A673 (cell line): ENCODE measurements at regions of chr18 and their contacts with region 1.

Region 1: DNA sequence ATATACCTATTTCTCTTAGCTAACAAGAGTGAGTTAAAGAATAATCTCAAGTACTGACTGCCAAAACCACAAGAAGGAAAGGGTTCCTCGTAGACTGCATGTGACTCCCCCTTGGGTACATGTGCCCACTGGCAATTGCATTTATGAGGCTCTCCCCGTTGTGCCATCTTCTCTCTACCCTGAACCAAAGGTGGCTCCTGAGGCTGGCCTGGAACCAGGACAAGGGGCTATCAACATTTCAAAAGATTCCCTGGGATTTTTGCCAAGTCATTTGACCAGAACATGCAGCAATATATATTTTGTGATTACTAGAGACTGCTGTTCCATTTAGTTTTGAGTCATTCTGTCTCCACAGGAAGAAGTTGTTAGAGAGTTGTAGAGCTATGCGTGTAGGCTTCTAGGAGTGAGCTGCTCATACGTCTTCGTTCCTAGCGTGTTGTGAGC is 45.8 kb downstream of the LAMA3 start:
- DNase-seq: peak; percentile 38
- H3K4me3 ChIP-seq: no peak overlapping the region
- H3K27ac ChIP-seq: no peak overlapping the region
- H3K4me1 ChIP-seq: peaks cover 18% of the 10 kb centered on the region
- H3K27me3 ChIP-seq: no peaks in the 10 kb centered on the region
- CTCF ChIP-seq: no peak

Region 2: GRCh38 chr18:23115683-23116096 is 619.4 kb before region 1 on chr18:
- CTCF ChIA-PET with region 1: no interaction called
- POLR2A ChIA-PET with region 1: no interaction called
- intact Hi-C with region 1: no loop called
- DNase-seq: peak; percentile 44
- H3K4me3 ChIP-seq: no peak overlapping the region
- H3K27ac ChIP-seq: no peak overlapping the region
- H3K4me1 ChIP-seq: peaks cover 27% of the 10 kb centered on the region
- H3K27me3 ChIP-seq: no peaks in the 10 kb centered on the region
- CTCF ChIP-seq: no peak

Region 3: GRCh38 chr18:23689031-23689615 is 45.9 kb before region 1 on chr18 and contains the start of gene LAMA3:
- CTCF ChIA-PET with region 1: no interaction called
- POLR2A ChIA-PET with region 1: no interaction called
- intact Hi-C with region 1: loop called (anchors 5 kb)
- DNase-seq: peak; percentile 68
- H3K4me3 ChIP-seq: peak within 1 kb of the TSS; percentile 46
- H3K27ac ChIP-seq: no peak within 1 kb of the TSS
- H3K4me1 ChIP-seq: no peaks in the 10 kb centered on the region
- H3K27me3 ChIP-seq: peaks cover 6% of the 10 kb centered on the region
- CTCF ChIP-seq: peak; percentile 40; the same call in 1 of the 2 replicates
- total RNA-seq, gene LAMA3: 2.6 and 2.7 TPM in 2 replicates